ENCODE measurements at regions of chr3 and their contacts with region 1.

Region 1: GRCh38 chr3:60081381-60082095 is 1031.7 kb upstream of the CFAP20DC start:
- DNase-seq: peak; percentile 78
- H3K4me3 ChIP-seq: peak overlapping the region; percentile 67
- H3K27ac ChIP-seq: peak overlapping the region; percentile 96
- H3K4me1 ChIP-seq: peaks cover 65% of the 10 kb centered on the region
- CTCF ChIP-seq: no peak

Region 2: DNA sequence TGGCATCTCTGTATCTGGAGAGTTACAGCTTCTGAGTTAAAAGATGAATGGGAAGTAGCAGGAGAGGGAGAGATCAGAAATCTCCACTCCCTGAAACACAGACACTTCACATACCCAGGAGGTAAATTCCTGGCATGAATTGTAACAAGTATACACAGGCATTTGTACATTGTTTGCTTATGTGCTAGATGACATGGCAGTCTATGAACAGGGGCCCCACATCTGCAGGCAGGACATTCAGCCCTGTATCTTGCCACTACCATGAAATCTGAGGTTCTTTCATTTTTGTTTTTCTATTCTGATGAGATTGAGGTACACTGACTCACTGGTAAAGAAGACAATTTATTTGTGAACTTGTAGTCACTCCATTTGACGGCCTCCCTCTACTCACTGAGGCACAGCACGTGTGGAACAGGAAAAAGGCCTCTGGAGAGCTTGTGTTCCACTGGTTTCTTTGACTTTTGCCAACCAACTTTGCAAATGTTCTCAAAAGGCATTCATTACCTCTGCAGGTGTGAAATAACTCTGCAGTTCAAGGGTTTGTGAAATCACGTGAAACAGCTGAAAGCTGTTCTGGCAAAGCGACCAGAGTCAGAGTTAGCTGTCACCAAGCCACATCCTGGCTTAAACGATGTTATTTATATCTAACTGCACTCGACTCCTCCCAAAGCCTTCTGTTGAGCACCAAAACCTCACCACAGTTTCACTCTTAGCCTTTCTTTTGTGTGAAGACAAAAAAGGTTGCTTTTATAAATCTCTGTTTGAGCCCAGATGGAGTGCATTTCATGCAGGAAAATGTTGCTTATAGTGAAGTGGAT is 630.4 kb before region 1 on chr3:
- CTCF ChIA-PET with region 1: no interaction called
- POLR2A ChIA-PET with region 1: no interaction called
- intact Hi-C with region 1: loop called (anchors 10 kb)
- DNase-seq: peak; percentile 92
- H3K4me3 ChIP-seq: peak overlapping the region; percentile 41
- H3K27ac ChIP-seq: peak overlapping the region; percentile 94
- H3K4me1 ChIP-seq: peaks cover 44% of the 10 kb centered on the region
- CTCF ChIP-seq: no peak

Region 3: GRCh38 chr3:59839810-59840515 is 241.6 kb before region 1 on chr3:
- CTCF ChIA-PET with region 1: no interaction called
- POLR2A ChIA-PET with region 1: no interaction called
- intact Hi-C with region 1: loop called (anchors 5 kb)
- DNase-seq: peak; percentile 23
- H3K4me3 ChIP-seq: no peak overlapping the region
- H3K27ac ChIP-seq: peak overlapping the region; percentile 27
- H3K4me1 ChIP-seq: peaks cover 15% of the 10 kb centered on the region
- CTCF ChIP-seq: no peak

Region 4: GRCh38 chr3:60246361-60246760 is 164.8 kb after region 1 on chr3:
- CTCF ChIA-PET with region 1: no interaction called
- POLR2A ChIA-PET with region 1: no interaction called
- intact Hi-C with region 1: loop called (anchors 5 kb)
- DNase-seq: no peak
- H3K4me3 ChIP-seq: no peak overlapping the region
- H3K27ac ChIP-seq: no peak overlapping the region
- H3K4me1 ChIP-seq: peaks cover 19% of the 10 kb centered on the region
- CTCF ChIP-seq: no peak

Region 5: DNA sequence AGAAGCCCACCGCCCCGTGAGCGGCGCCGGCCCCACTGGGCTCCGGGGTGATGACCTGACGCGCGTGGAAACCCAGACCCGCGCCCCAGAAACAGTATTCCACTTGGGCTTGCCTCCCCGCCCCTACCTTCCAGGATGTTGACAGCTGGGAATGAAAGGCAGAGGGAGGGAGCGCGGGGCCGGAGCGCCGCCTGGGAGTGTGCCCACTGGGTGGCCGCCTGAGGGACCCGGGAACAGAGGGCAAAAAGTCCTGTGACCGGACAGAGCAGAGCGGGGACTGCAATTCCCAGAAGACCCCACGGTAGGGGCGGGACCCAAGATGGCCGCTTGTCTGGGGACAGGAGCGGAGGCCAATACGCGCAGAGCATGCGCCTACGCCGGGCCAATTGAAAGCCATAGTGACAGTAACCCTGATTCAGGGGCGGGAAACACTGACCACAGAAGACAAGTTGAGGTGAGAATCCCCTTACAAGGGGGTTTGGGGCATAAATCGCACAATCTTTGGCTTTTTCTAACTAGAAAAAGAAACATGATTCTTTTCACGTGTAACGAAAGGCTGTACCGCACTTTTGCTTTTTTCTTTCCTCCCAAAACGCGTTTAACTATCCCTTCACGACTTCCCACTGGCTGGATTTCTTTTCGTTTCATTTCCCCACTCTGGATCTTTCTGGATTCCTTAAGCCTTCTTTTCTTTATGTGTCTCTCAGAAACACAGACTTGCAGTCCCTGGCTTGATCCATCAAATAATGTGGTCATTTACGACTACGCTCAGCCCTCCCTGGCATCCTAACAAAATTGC is 1169.8 kb after region 1 on chr3 and contains the start of gene FHIT:
- CTCF ChIA-PET with region 1: no interaction called
- POLR2A ChIA-PET with region 1: no interaction called
- intact Hi-C with region 1: loop called (anchors 2 kb)
- DNase-seq: peak; percentile 96
- H3K4me3 ChIP-seq: peak within 1 kb of the TSS; percentile 80
- H3K27ac ChIP-seq: peak within 1 kb of the TSS; percentile 27
- H3K4me1 ChIP-seq: peaks cover 27% of the 10 kb centered on the region
- CTCF ChIP-seq: no peak
- total RNA-seq, gene FHIT: 2.3 and 5.0 TPM in 2 replicates